CD4-positive, alpha-beta memory T cell (primary cell): ENCODE measurements at regions of chr19 and their contacts with region 1.

Region 1: DNA sequence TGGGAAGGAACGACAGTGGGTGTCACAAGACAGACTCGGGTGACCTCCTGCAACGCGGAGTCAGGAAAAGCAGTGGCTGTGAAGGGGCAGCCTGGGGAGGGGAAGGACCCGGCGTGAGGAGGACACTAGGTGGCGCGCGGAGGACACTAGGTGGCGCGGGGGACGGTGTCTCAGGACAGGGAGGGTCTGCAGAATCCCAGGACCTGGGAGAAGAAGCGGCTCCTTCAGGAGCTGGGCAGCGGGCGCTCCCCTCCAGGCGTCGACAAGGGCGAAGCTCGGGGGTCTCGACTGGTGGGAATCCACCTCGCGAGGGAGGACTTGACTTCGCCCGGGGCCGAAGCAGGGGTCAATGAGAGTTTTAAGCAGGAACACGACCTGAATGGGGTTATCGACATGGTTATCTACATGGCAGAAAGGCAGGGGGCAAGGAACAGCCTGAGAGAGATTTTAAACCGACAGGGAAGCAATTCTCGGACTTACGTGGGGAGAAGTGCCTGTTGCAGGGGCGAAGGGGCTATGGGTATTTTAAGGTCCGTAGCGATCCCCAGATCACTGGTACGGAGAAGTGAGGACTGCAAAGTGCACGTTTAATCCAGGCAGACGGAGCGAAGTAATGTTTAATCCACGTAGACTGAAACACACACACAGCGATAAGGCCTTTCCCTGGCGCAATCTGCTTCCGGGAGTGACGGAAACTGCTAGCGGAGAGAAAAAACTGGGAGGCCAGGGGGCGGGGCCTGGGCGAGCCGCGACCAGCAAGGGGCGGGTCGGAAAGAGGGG is at the start of gene ZNF616:
- DNase-seq: peak; percentile 64 to 97 (median 96)
- H3K4me3 ChIP-seq: peak within 1 kb of the TSS; percentile 72 to 75
- H3K4me3 Mint-ChIP-seq: peak within 1 kb of the TSS; percentile 90 to 98 (median 96)
- H3K27ac ChIP-seq: peak within 1 kb of the TSS; percentile 75
- H3K27ac Mint-ChIP-seq: peak within 1 kb of the TSS; percentile 91 to 98 (median 94)
- H3K4me1 ChIP-seq: peaks cover 18% of the 10 kb centered on the region
- H3K4me1 Mint-ChIP-seq: peaks cover 23 to 38% (median 29%) of the 10 kb centered on the region in 4 donors
- H3K27me3 ChIP-seq: no peaks in the 10 kb centered on the region
- H3K27me3 Mint-ChIP-seq: no peaks in the 10 kb centered on the region
- total RNA-seq, gene ZNF616: 18.6 to 19.0 TPM

Region 2: GRCh38 chr19:51926784-51927742 is 212.4 kb before region 1 on chr19 and contains the start of gene ZNF613:
- CTCF ChIA-PET with region 1: no interaction called
- POLR2A ChIA-PET with region 1: no interaction called
- intact Hi-C with region 1: loop called (anchors 2 kb)
- DNase-seq: peak; percentile 81 to 89 (median 85)
- H3K4me3 ChIP-seq: peak within 1 kb of the TSS; percentile 85 to 91
- H3K4me3 Mint-ChIP-seq: peak within 1 kb of the TSS; percentile 93 to 99 (median 98)
- H3K27ac ChIP-seq: peak within 1 kb of the TSS; percentile 55
- H3K27ac Mint-ChIP-seq: peak within 1 kb of the TSS; percentile 82 to 97 (median 95)
- H3K4me1 ChIP-seq: peaks cover 11% of the 10 kb centered on the region
- H3K4me1 Mint-ChIP-seq: peaks cover 16 to 38% (median 24%) of the 10 kb centered on the region in 4 donors
- H3K27me3 ChIP-seq: no peaks in the 10 kb centered on the region
- H3K27me3 Mint-ChIP-seq: peaks cover 0 to 2% of the 10 kb centered on the region in 2 donors
- total RNA-seq, gene ZNF613: 8.0 to 8.9 TPM

Region 3: DNA sequence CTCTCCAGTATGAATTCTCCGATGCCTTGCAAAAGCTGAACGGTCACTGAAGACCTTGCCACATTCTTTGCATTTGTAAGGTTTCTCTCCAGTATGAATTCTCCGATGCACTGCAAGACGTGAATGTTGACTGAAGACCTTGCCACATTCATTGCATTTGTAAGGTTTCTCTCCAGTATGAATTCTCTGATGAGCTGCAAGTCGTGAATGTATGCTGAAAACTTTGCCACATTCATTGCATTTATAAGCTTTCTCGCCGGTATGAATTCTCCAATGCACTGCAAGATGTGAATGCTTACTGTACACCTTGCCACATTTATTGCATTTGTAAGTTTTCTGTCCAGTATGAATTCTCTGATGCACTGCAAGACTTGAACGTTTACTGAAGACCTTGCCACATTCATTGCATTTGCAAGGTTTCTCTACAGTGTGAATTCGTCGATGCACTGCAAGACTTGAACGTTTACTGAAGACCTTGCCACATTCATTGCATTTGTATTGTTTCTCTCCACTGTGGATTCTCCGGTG is 23.9 kb before region 1 on chr19:
- CTCF ChIA-PET with region 1: no interaction called
- POLR2A ChIA-PET with region 1: no interaction called
- intact Hi-C with region 1: no loop called
- DNase-seq: no peak
- H3K4me3 ChIP-seq: peak overlapping the region in 1 of 2 donors; percentile 1
- H3K4me3 Mint-ChIP-seq: no peak overlapping the region
- H3K27ac ChIP-seq: no peak overlapping the region
- H3K27ac Mint-ChIP-seq: no peak overlapping the region
- H3K4me1 ChIP-seq: no peaks in the 10 kb centered on the region
- H3K4me1 Mint-ChIP-seq: no peaks in the 10 kb centered on the region
- H3K27me3 ChIP-seq: no peaks in the 10 kb centered on the region
- H3K27me3 Mint-ChIP-seq: no peaks in the 10 kb centered on the region

Region 4: GRCh38 chr19:52171321-52172169 is 32.1 kb after region 1 on chr19 and contains the start of gene ZNF836:
- CTCF ChIA-PET with region 1: interaction called, 17 read pairs
- POLR2A ChIA-PET with region 1: interaction called, 20 read pairs
- intact Hi-C with region 1: loop called (anchors 1 kb)
- DNase-seq: peak; percentile 89 to 93 (median 92)
- H3K4me3 ChIP-seq: peak within 1 kb of the TSS; percentile 90 to 93
- H3K4me3 Mint-ChIP-seq: peak within 1 kb of the TSS; percentile 89 to 99 (median 96)
- H3K27ac ChIP-seq: peak within 1 kb of the TSS; percentile 80
- H3K27ac Mint-ChIP-seq: peak within 1 kb of the TSS; percentile 83 to 97 (median 97)
- H3K4me1 ChIP-seq: peaks cover 25% of the 10 kb centered on the region
- H3K4me1 Mint-ChIP-seq: peaks cover 23 to 39% (median 35%) of the 10 kb centered on the region in 4 donors
- H3K27me3 ChIP-seq: no peaks in the 10 kb centered on the region
- H3K27me3 Mint-ChIP-seq: no peaks in the 10 kb centered on the region
- total RNA-seq, gene ZNF836: 47.2 to 54.7 TPM

Region 5: GRCh38 chr19:52189735-52190486 is 50.5 kb after region 1 on chr19 and contains the start of gene PPP2R1A:
- CTCF ChIA-PET with region 1: interaction called, 9 read pairs
- POLR2A ChIA-PET with region 1: interaction called, 40 read pairs
- intact Hi-C with region 1: loop called (anchors 1 kb)
- DNase-seq: peak; percentile 97 to 100 (median 99)
- H3K4me3 ChIP-seq: peak within 1 kb of the TSS; percentile 75 to 87
- H3K4me3 Mint-ChIP-seq: peak within 1 kb of the TSS; percentile 94 to 99 (median 98)
- H3K27ac ChIP-seq: peak within 1 kb of the TSS; percentile 93
- H3K27ac Mint-ChIP-seq: peak within 1 kb of the TSS; percentile 92 to 100 (median 99)
- H3K4me1 ChIP-seq: peaks cover 53% of the 10 kb centered on the region
- H3K4me1 Mint-ChIP-seq: peaks cover 34 to 58% (median 43%) of the 10 kb centered on the region in 4 donors
- H3K27me3 ChIP-seq: no peaks in the 10 kb centered on the region
- H3K27me3 Mint-ChIP-seq: no peaks in the 10 kb centered on the region
- total RNA-seq, gene PPP2R1A: 166 to 175 TPM

Region 6: GRCh38 chr19:52237771-52238400 is 98.4 kb after region 1 on chr19:
- CTCF ChIA-PET with region 1: interaction called, 68 read pairs
- POLR2A ChIA-PET with region 1: interaction called, 19 read pairs
- intact Hi-C with region 1: loop called (anchors 1 kb)
- DNase-seq: peak; percentile 47 to 55 (median 51)
- H3K4me3 ChIP-seq: no peak overlapping the region
- H3K4me3 Mint-ChIP-seq: no peak overlapping the region
- H3K27ac ChIP-seq: no peak overlapping the region
- H3K27ac Mint-ChIP-seq: peak overlapping the region in 2 of 7 donors; percentile 1 to 46
- H3K4me1 ChIP-seq: no peaks in the 10 kb centered on the region
- H3K4me1 Mint-ChIP-seq: peaks cover 0 to 3% (median 0%) of the 10 kb centered on the region in 4 donors
- H3K27me3 ChIP-seq: no peaks in the 10 kb centered on the region
- H3K27me3 Mint-ChIP-seq: no peaks in the 10 kb centered on the region

Region 7: GRCh38 chr19:52748336-52748950 is 609.0 kb after region 1 on chr19:
- CTCF ChIA-PET with region 1: no interaction called
- POLR2A ChIA-PET with region 1: no interaction called
- intact Hi-C with region 1: loop called (anchors 1 kb)
- DNase-seq: peak in 4 of 5 donors; percentile 30 to 41 (median 35)
- H3K4me3 ChIP-seq: no peak overlapping the region
- H3K4me3 Mint-ChIP-seq: no peak overlapping the region
- H3K27ac ChIP-seq: no peak overlapping the region
- H3K27ac Mint-ChIP-seq: no peak overlapping the region
- H3K4me1 ChIP-seq: no peaks in the 10 kb centered on the region
- H3K4me1 Mint-ChIP-seq: peaks cover 2 to 20% (median 7%) of the 10 kb centered on the region in 4 donors
- H3K27me3 ChIP-seq: no peaks in the 10 kb centered on the region
- H3K27me3 Mint-ChIP-seq: no peaks in the 10 kb centered on the region